AG04449 (cell line): ENCODE measurements at regions of chr19 and their contacts with region 1.

Region 1: DNA sequence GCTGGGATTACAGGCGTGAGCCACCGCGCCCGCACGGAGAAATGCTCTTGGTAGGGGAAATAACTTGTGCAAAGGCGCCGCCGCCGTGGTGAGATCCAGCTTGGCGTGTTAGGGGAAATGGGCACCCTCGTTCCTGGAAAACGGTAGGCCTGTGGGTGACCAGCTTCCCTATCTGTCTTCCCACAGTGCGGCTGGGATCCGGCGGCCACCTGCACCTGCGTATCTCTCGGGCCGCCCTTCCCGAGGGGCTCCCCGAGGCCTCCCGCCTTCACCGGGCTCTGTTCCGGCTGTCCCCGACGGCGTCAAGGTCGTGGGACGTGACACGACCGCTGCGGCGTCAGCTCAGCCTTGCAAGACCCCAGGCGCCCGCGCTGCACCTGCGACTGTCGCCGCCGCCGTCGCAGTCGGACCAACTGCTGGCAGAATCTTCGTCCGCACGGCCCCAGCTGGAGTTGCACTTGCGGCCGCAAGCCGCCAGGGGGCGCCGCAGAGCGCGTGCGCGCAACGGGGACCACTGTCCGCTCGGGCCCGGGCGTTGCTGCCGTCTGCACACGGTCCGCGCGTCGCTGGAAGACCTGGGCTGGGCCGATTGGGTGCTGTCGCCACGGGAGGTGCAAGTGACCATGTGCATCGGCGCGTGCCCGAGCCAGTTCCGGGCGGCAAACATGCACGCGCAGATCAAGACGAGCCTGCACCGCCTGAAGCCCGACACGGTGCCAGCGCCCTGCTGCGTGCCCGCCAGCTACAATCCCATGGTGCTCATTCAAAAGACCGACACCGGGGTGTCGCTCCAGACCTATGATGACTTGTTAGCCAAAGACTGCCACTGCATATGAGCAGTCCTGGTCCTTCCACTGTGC is 2.4 kb downstream of the GDF15 start:
- DNase-seq: no peak
- H3K4me3 ChIP-seq: peak overlapping the region; percentile 66
- CTCF ChIP-seq: peak; percentile 97

Region 2: GRCh38 chr19:18340190-18340989 is 47.9 kb before region 1 on chr19 and contains the start of gene PGPEP1:
- CTCF ChIA-PET with region 1: interaction called, 10 read pairs
- POLR2A ChIA-PET with region 1: no interaction called
- DNase-seq: no peak
- H3K4me3 ChIP-seq: peak within 1 kb of the TSS; percentile 80
- CTCF ChIP-seq: no peak

Region 3: DNA sequence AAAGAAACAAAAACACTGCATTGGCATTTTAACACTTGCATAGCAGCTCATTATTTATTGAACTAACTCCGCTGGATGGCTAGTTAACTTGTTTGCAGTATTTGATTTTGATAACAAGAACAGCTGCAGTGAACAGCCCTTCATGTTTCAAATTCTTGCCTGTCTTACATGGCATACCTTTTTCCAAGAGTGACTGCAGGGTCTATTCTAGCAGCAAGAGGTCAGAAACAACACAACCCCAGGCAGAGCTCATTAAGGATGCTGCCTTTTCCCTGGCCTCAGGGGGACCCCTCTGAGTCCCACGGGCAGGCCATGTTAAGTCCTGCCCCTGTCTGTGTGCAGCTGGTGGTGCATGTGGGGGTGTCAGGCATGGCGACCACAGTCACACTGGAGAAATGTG is 31.3 kb before region 1 on chr19:
- CTCF ChIA-PET with region 1: interaction called, 27 read pairs
- POLR2A ChIA-PET with region 1: interaction called, 5 read pairs
- DNase-seq: no peak
- H3K4me3 ChIP-seq: no peak overlapping the region
- CTCF ChIP-seq: no peak

Region 4: DNA sequence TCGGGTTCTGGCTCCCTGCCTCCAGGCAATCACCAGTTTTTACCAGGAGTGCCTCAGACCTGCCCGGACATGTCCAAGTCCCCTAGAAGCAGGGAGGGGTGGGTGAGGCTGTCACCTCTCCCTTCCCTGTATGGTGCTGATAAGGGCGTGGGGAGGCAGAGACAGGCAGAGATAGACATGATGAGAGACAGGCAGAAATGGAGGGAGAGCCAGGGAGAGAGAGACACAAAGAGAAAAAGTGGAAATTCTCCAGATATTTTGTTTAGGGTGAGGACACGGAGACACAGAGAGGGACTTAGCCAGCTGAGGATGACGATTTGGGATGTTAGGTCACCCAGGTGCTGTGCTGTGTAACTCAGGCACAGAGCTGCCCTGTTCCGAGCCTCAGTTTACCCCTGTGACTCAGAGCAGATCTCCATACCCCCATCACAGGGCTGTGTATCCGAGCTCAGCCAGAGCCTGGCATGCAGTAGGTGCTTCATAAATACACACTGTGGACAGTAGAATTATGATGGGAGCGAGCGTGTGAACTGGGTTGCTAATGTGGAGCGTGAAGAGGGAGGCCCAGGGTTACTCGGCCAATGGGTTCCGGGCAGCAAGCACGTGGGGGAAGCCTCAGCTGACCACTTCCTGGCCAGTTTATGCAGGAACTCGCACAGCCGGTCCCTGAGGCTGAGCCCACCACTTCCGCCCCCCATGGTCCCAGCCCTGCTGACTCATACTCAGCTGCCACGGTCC is 14.3 kb before region 1 on chr19:
- CTCF ChIA-PET with region 1: interaction called, 18 read pairs
- POLR2A ChIA-PET with region 1: interaction called, 17 read pairs
- DNase-seq: peak; percentile 91
- H3K4me3 ChIP-seq: no peak overlapping the region
- CTCF ChIP-seq: no peak

Region 5: DNA sequence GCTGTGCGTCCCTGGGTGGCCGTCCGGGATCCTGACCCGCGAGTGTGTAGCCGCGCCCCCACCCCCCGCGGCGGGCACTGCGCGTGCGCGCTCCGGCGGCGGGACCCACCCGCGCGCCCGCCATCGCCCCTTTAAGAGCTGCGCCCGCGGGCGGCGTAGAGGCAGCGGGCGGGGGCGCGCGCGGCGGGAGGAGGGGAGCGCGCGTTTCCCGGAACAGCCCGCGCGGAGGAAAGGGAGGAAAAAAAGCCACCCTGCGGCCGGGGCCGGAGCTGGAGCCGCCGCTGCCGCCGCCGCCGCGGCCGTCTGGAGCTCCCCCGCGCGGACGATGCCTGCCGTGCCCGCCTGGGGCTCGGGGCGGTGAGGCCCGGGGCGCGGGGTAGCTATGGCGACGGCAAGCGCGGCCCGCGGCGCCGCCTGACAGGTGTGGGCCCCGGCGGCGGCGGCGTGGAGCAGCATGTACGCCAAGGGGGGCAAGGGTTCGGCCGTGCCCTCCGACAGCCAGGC is 30.9 kb after region 1 on chr19 and contains the start of gene SSBP4:
- CTCF ChIA-PET with region 1: interaction called, 170 read pairs
- POLR2A ChIA-PET with region 1: interaction called, 4 read pairs
- DNase-seq: no peak
- H3K4me3 ChIP-seq: peak within 1 kb of the TSS; percentile 73
- CTCF ChIP-seq: peak; percentile 24

Region 6: DNA sequence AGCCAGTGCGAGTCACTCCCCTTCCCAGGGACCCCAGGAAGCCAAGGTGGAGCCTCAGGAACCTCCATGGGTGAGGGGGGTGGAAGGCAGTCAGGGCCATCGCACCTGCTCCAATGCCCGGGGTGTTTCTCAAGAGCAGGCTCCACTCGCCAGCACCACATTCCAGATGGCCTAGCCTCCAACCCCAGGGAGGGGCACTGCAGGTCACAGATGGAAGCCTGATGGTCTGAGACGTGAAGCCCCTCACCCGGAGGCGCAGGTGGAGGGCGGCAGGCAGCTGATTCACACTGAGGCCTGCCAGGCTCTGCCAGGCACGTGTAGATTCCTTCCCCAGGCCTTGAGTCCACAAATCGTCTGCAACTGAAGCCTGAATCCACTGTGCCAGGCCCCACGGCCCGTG is 72.6 kb after region 1 on chr19:
- CTCF ChIA-PET with region 1: no interaction called
- POLR2A ChIA-PET with region 1: no interaction called
- DNase-seq: no peak
- H3K4me3 ChIP-seq: no peak overlapping the region
- CTCF ChIP-seq: no peak

Region 7: DNA sequence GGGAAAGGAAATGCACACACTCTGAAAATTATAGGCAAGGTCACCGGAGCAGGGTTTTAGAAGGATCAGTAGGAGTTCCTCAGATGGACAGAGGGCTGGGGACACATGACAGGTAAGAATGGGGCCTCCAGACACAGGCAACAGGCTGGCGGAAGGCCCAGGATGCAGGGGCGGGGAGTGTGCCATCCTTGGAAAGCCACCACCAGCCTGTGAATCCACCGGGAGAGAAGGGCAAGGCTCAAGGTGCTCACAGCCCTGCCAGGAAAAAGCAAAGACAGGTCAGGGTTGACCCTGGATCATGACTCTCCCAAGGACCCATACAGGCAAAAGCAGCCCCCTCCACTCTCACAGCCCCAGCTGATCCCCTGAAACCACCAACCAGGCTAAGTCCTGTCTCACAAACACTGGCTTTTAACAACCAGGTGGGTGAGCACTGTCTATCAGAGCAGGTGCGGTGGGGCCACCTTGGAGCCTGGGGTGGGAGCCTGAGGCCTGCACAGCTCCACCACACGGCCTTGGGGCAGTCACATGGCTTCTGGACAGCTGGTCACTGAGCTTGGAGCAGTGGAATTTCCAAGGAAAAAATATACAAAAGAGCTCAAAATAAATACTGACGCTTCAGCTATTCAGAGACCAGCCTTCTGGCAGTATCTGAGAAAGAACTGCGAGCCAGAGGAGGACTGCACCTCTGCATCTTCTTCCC is 84.8 kb after region 1 on chr19:
- CTCF ChIA-PET with region 1: no interaction called
- POLR2A ChIA-PET with region 1: no interaction called
- DNase-seq: no peak
- H3K4me3 ChIP-seq: no peak overlapping the region
- CTCF ChIP-seq: no peak